ENCODE measurements at regions of chr21 and their contacts with region 1.

Region 1: GRCh38 chr21:25573409-25574206 is 33.7 kb downstream of the MRPL39 start:
- DNase-seq: peak; percentile 38
- H3K4me3 Mint-ChIP-seq: peak overlapping the region; percentile 77
- H3K27ac Mint-ChIP-seq: peak overlapping the region; percentile 93
- H3K4me1 Mint-ChIP-seq: peaks cover 76% of the 10 kb centered on the region
- H3K27me3 Mint-ChIP-seq: no peaks in the 10 kb centered on the region

Region 2: GRCh38 chr21:25396135-25396711 is 177.4 kb before region 1 on chr21:
- intact Hi-C with region 1: loop called (anchors 1 kb)
- DNase-seq: peak; percentile 48
- H3K4me3 Mint-ChIP-seq: peak overlapping the region; percentile 2
- H3K27ac Mint-ChIP-seq: peak overlapping the region; percentile 88
- H3K4me1 Mint-ChIP-seq: peaks cover 17% of the 10 kb centered on the region
- H3K27me3 Mint-ChIP-seq: no peaks in the 10 kb centered on the region

Region 3: DNA sequence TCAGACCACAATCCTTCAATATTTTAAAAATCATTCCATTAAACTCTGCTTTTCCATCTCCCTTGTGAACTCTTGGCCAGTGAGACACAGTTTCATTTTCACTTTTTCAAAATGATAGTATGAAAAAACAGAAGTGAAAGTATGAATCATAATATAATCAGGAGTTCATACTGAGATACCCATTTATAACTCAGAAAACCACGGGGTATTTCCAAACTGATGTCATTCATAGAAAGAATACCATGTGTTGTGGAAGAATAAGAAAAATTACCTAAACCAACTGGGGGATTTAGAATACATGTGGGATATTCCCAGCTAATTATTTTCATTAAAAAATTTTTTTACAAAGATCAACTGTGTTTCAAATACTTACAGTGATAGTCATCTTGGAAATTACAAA is 116.2 kb before region 1 on chr21:
- intact Hi-C with region 1: loop called (anchors 1 kb)
- DNase-seq: no peak
- H3K4me3 Mint-ChIP-seq: peak overlapping the region; percentile 58
- H3K27ac Mint-ChIP-seq: peak overlapping the region; percentile 84
- H3K4me1 Mint-ChIP-seq: peaks cover 50% of the 10 kb centered on the region
- H3K27me3 Mint-ChIP-seq: no peaks in the 10 kb centered on the region

Region 4: GRCh38 chr21:25501996-25502665 is 71.5 kb before region 1 on chr21:
- intact Hi-C with region 1: loop called (anchors 1 kb)
- DNase-seq: no peak
- H3K4me3 Mint-ChIP-seq: no peak overlapping the region
- H3K27ac Mint-ChIP-seq: peak overlapping the region; percentile 92
- H3K4me1 Mint-ChIP-seq: peaks cover 40% of the 10 kb centered on the region
- H3K27me3 Mint-ChIP-seq: no peaks in the 10 kb centered on the region

Region 5: DNA sequence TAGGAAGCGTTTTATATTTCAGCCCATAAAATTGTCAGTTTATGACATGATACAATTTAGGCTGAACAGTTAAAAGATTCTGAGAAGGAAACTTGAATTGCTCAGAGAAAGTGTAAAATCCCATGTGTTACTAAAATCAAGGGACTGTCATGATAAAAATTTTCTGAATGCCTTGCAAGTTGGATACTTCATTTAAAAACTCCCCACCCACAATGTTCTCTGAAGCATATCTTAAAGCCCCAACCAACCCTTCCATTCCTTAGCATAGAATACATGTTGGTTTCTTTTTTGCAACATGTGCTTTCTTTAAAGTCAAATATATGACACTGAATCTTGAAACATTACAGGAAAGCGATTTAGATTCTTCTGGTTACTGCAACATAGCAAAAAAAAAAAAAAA is 63.7 kb before region 1 on chr21:
- intact Hi-C with region 1: loop called (anchors 1 kb)
- DNase-seq: no peak
- H3K4me3 Mint-ChIP-seq: peak overlapping the region; percentile 27
- H3K27ac Mint-ChIP-seq: peak overlapping the region; percentile 63
- H3K4me1 Mint-ChIP-seq: peaks cover 51% of the 10 kb centered on the region
- H3K27me3 Mint-ChIP-seq: no peaks in the 10 kb centered on the region